B cell (primary cell): ENCODE measurements at regions of chr1 and their contacts with region 1.

Region 1: GRCh38 chr1:211891708-211892107 is 61.1 kb upstream of the LPGAT1 start:
- DNase-seq: no peak
- ATAC-seq: no peak
- H3K4me3 ChIP-seq: no peak overlapping the region
- H3K4me3 Mint-ChIP-seq: no peak overlapping the region
- H3K27ac ChIP-seq: no peak overlapping the region
- H3K27ac Mint-ChIP-seq: no peak overlapping the region
- H3K4me1 ChIP-seq: no peaks in the 10 kb centered on the region
- H3K4me1 Mint-ChIP-seq: peaks cover 2% of the 10 kb centered on the region
- H3K27me3 ChIP-seq: peaks cover 0 to 3% (median under 1%) of the 10 kb centered on the region in 4 experiments
- H3K27me3 Mint-ChIP-seq: peaks cover 23% of the 10 kb centered on the region
- CTCF ChIP-seq: no peak

Region 2: DNA sequence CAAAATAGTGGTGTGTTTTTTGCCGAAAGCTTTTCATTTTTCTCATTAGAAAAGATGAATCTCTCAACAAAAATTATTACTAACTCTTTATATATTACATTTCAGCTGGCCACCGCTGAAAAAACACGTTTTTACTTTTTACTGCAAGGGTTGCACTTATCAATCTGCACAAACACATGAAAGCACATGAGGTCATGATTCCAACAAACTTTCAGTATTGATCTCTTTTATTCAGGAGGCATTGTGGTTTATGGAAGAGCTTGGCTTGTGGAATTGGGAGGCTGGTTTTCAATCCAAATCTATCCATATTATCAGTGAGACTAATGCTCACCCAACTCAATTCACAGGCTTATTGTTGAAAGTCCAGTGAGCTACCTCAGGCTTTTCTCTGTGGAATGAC is 40.5 kb before region 1 on chr1:
- CTCF ChIA-PET with region 1: no interaction called
- POLR2A ChIA-PET with region 1: interaction called, 11 read pairs
- intact Hi-C with region 1: no loop called
- DNase-seq: no peak
- ATAC-seq: no peak
- H3K4me3 ChIP-seq: no peak overlapping the region
- H3K4me3 Mint-ChIP-seq: no peak overlapping the region
- H3K27ac ChIP-seq: no peak overlapping the region
- H3K27ac Mint-ChIP-seq: no peak overlapping the region
- H3K4me1 ChIP-seq: no peaks in the 10 kb centered on the region
- H3K4me1 Mint-ChIP-seq: no peaks in the 10 kb centered on the region
- H3K27me3 ChIP-seq: peaks cover 0 to 2% (median 0%) of the 10 kb centered on the region in 4 experiments
- H3K27me3 Mint-ChIP-seq: peaks cover 11% of the 10 kb centered on the region
- CTCF ChIP-seq: no peak